Activated CD4-positive, alpha-beta T cell treated with anti-CD3 and anti-CD28 coated beads, Interleukin-2, amount 10 ng/mL, durations not matched to agents 7 days and 5 days (primary cell): ENCODE measurements at regions of chr15 and their contacts with region 1.

Region 1: DNA sequence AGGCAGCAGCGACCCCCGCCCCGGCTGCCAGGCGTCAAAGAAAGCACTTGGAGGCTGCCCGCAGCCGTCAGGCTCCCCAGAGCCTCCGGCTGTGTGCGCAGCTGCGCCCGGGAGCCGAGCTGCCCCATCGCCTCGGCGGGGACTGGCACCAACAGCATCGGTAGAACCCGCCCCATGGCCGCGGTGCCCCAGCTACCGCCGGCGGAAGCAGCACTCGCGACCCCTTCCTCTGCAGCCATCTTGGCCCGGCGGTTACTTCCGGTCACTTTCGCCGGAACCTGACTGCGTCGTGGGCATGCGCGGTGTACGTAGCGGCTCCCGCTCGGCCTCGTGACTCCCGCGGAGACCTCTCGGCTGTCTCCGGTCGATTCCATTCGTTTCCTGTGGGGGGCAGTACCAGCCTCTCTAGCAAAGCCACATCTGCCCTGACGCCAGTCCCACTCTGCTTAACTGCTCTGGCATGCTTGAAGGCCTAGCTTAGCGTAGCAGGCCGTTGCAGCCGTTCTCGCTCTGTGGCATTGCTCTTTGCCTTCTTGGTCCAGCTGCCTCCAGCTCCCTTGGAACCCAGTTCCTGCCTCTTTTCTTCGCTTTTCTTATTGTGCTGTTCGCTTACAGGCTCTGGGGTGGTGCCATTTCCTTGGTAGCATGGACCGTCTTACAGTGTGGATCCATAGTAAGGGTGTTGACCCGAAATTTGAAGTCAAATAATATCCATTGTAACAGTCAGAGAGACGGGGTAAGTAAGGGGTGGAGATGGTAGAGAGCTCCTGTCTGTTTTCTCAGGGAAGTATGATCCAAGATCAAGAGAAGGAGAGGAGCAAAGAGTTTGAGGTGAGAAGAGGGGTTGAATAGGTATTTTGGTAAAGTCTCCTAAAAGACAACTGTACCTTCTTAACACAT is at the start of gene SPG11:
- DNase-seq: peak; percentile 99
- H3K4me3 Mint-ChIP-seq: peak within 1 kb of the TSS; percentile 99
- H3K27ac Mint-ChIP-seq: peak within 1 kb of the TSS; percentile 96
- H3K4me1 Mint-ChIP-seq: peaks cover 63% of the 10 kb centered on the region
- H3K27me3 Mint-ChIP-seq: no peaks in the 10 kb centered on the region
- total RNA-seq, gene SPG11: 69.2 to 77.6 TPM

Region 2: DNA sequence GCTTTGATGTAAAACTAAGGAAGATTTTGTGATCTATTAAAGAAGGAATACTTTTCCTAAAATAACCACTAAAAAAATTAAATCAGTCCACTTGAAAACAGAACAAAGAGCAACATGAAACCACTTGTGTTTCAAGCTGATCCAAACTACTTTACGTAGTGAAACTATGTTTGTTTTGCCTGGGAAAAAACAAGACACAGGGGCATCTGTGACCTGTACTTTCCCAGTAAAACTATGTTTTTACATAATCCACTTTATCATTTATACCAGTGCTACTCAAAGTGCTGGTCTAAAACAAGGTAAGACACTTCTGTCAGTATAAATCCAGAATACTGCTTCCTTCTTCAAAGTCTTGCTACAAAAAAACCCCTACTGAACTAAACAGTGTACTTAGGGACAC is 56.9 kb before region 1 on chr15:
- CTCF ChIA-PET with region 1: no interaction called
- POLR2A ChIA-PET with region 1: no interaction called
- DNase-seq: no peak
- H3K4me3 Mint-ChIP-seq: no peak overlapping the region
- H3K27ac Mint-ChIP-seq: no peak overlapping the region
- H3K4me1 Mint-ChIP-seq: peaks cover under 1% of the 10 kb centered on the region
- H3K27me3 Mint-ChIP-seq: no peaks in the 10 kb centered on the region

Region 3: GRCh38 chr15:44647036-44647435 is 16.6 kb before region 1 on chr15:
- CTCF ChIA-PET with region 1: interaction called, 38 read pairs
- POLR2A ChIA-PET with region 1: no interaction called
- DNase-seq: no peak
- H3K4me3 Mint-ChIP-seq: no peak overlapping the region
- H3K27ac Mint-ChIP-seq: no peak overlapping the region
- H3K4me1 Mint-ChIP-seq: peaks cover 28% of the 10 kb centered on the region
- H3K27me3 Mint-ChIP-seq: no peaks in the 10 kb centered on the region

Region 4: GRCh38 chr15:44682211-44682610 is 18.6 kb after region 1 on chr15:
- CTCF ChIA-PET with region 1: interaction called, 33 read pairs
- POLR2A ChIA-PET with region 1: interaction called, 10 read pairs
- DNase-seq: no peak
- H3K4me3 Mint-ChIP-seq: peak overlapping the region; percentile 65
- H3K27ac Mint-ChIP-seq: peak overlapping the region; percentile 92
- H3K4me1 Mint-ChIP-seq: peaks cover 86% of the 10 kb centered on the region
- H3K27me3 Mint-ChIP-seq: no peaks in the 10 kb centered on the region

Region 5: GRCh38 chr15:44711356-44712107 is 47.9 kb after region 1 on chr15 and contains the start of gene B2M:
- CTCF ChIA-PET with region 1: interaction called, 287 read pairs
- POLR2A ChIA-PET with region 1: interaction called, 283 read pairs
- DNase-seq: peak; percentile 96
- H3K4me3 Mint-ChIP-seq: peak within 1 kb of the TSS; percentile 96
- H3K27ac Mint-ChIP-seq: peak within 1 kb of the TSS; percentile 99
- H3K4me1 Mint-ChIP-seq: peaks cover 42% of the 10 kb centered on the region
- H3K27me3 Mint-ChIP-seq: no peaks in the 10 kb centered on the region
- total RNA-seq, gene B2M: 9,253 to 11,726 TPM

Region 6: DNA sequence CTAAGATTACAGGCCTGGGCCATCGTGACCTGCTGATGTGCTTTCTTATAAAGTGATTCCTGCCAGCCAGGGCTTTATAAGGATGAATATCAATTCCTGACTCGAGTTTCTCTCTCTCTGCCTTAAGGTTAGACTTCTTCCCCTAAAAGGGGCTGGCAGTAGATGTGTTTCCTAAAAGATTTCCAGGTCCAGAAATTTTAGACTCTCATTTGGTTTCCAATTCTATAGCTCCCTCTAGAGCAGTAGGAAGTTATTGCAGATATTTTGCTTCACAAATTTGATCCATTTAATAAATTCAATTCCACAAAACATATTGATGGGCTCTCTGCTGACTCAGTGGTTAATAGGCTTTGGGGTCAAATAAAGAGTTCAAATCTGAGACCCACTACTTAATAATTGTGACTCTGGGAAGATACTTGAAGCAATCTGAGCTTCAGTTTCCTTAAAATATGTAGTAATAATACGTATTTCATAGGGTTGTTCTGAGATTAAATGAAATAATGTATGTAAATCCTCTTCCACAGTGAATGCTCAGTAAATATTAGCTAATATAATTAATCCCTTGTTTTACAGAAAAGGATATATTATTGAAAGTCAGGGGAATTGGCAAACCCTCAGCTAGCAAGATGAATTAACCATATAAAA is 74.8 kb after region 1 on chr15:
- CTCF ChIA-PET with region 1: interaction called, 92 read pairs
- POLR2A ChIA-PET with region 1: interaction called, 28 read pairs
- DNase-seq: no peak
- H3K4me3 Mint-ChIP-seq: no peak overlapping the region
- H3K27ac Mint-ChIP-seq: no peak overlapping the region
- H3K4me1 Mint-ChIP-seq: peaks cover 54% of the 10 kb centered on the region
- H3K27me3 Mint-ChIP-seq: no peaks in the 10 kb centered on the region